ENCODE measurements at regions of chr19 and their contacts with region 1.

Region 1: DNA sequence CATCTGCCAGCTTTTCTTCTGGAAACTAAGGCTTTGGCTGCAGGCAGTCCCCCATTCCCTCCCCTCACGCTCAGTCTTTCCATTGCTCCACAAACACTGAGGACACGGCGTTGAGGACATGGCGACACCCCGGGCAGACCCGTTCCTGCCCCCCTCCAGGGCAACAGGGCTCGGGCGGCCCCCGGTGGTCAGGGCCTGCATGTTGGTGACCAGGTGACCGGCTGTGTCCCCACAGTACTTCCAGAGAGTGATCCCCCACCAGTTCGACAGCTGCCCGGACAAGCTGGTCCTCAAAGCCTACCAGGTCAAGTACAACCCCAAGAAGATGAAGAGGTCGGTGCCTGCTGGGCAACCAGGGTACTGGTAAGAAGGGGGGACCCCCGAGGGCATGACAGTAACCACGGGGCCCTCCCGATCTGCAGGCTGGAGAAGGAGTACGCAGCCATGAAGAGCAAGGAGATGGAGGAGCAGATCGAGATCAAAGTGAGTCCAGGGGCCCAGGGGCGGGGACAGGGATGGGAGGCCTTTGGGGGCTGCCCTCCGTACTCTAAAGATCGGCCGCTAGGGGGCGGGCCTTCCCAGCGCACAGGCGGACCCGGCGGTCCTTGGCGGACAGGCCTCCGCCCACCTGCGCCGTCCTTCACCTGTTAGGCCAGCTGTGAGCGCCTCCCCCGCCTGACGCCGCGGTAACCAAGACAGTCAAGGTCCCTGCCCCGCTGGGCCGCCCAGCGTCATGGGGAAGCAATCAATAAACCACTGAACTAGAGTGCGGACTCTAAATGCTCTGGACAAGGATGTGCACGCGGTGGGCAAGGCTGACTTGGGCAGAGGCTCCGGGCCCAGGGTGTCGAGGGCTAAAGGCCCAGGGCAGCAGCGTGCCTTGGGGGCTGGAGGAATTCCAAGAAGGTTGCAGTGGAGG is 21.1 kb downstream of the PRR36 start:
- DNase-seq: peak in 1 of 2 donors; percentile 44
- ATAC-seq: peak; percentile 45 to 72
- H3K4me3 ChIP-seq: no peak overlapping the region
- H3K27ac ChIP-seq: no peak overlapping the region
- H3K4me1 ChIP-seq: peaks cover 0 to 6% of the 10 kb centered on the region in 2 donors
- H3K27me3 ChIP-seq: peaks cover 0 to 3% (median 0%) of the 10 kb centered on the region in 3 donors
- CTCF ChIP-seq: peak; percentile 52 to 86 (median 79)
- POLR2A ChIP-seq: no peak

Region 2: DNA sequence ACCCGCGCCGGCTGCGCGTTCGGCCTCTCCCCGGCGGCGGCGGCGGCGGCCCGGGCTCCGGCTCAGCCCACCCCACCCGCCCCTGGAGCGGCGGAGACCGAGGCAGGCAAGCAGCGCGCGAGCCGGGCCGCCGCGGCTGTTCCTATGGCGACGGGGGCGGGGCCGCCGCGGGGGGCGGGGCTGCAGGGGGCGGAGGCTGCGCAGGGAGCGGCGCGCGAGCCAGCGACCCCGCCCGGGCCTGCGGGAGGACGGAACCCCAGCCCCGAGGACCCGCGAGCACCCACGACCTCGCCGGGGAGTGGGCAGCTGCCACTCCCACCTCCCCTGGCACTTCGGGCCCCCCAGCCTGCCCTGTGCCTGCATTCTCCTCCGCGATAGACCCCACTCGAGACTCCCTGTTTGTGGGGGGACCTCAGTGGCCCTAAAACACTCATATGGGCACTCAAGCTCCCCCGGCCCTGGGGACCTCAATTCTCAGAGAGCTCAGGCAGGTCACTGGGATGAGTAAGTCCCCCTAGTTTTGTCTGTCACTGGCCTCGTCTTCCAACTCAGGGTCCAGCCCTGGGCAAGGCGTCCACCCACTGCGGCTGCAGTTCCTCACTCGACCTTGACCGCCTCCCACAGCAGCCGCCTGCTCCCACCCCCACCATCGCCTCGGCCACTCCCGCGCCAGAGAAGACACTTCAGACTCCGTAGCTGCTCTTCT is 73.1 kb after region 1 on chr19 and contains the start of gene CTXN1:
- in situ Hi-C with region 1: no loop called
- intact Hi-C with region 1: loop called (anchors 2 kb)
- DNase-seq: no peak
- ATAC-seq: peak; percentile 37 to 61
- H3K4me3 ChIP-seq: peak within 1 kb of the TSS; percentile 39 to 53 (median 46)
- H3K27ac ChIP-seq: peak within 1 kb of the TSS in 1 of 4 donors; percentile 29
- H3K4me1 ChIP-seq: peaks cover 12 to 31% of the 10 kb centered on the region in 2 donors
- H3K27me3 ChIP-seq: peaks cover 0 to 6% (median 0%) of the 10 kb centered on the region in 3 donors
- CTCF ChIP-seq: no peak
- POLR2A ChIP-seq: no peak
- total RNA-seq, gene CTXN1: not detected